Spleen (tissue), 13 donors: ENCODE measurements at regions of chr2 and their contacts with region 1.

Region 1: DNA sequence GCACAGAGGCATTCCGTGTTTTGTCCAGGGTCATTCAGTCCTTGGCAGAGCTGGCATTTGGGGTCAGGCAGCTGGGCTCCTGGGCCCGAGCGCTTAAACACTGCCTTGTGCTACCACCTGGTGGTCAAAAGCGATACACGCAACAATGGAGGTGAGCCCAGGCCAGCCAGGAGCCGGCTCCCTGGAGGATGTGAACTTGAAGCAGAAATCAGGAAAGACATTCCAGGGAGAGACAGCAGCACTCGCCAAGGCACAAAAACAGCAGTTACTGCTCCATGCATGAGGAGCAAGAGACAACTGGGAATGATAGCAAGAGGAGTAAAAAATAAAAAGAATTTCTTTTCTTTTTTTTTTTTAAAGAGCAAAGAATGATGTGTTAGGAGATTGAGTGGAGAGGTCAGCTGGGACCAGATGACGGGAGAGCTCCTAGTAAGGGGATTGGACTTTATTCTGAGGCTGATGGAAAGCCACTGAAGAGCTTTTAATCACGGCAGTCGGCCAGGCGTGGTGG is 20.7 kb downstream of the SCYGR8 start:
- DNase-seq: peak; percentile 89
- H3K4me3 ChIP-seq: no peak overlapping the region
- H3K27ac ChIP-seq: no peak overlapping the region
- H3K4me1 ChIP-seq: peaks cover 0 to 7% (median 0%) of the 10 kb centered on the region in 6 donors
- H3K27me3 ChIP-seq: no peaks in the 10 kb centered on the region
- CTCF ChIP-seq: peak; percentile 72 to 92 (median 86)
- POLR2A ChIP-seq: no peak

Region 2: GRCh38 chr2:227125506-227125905 is 640.9 kb before region 1 on chr2:
- intact Hi-C with region 1: loop called (anchors 10 kb)
- DNase-seq: no peak
- H3K4me3 ChIP-seq: no peak overlapping the region
- H3K27ac ChIP-seq: no peak overlapping the region
- H3K4me1 ChIP-seq: no peaks in the 10 kb centered on the region
- H3K27me3 ChIP-seq: peaks cover 0 to 6% (median 0%) of the 10 kb centered on the region in 7 donors
- CTCF ChIP-seq: no peak
- POLR2A ChIP-seq: no peak

Region 3: DNA sequence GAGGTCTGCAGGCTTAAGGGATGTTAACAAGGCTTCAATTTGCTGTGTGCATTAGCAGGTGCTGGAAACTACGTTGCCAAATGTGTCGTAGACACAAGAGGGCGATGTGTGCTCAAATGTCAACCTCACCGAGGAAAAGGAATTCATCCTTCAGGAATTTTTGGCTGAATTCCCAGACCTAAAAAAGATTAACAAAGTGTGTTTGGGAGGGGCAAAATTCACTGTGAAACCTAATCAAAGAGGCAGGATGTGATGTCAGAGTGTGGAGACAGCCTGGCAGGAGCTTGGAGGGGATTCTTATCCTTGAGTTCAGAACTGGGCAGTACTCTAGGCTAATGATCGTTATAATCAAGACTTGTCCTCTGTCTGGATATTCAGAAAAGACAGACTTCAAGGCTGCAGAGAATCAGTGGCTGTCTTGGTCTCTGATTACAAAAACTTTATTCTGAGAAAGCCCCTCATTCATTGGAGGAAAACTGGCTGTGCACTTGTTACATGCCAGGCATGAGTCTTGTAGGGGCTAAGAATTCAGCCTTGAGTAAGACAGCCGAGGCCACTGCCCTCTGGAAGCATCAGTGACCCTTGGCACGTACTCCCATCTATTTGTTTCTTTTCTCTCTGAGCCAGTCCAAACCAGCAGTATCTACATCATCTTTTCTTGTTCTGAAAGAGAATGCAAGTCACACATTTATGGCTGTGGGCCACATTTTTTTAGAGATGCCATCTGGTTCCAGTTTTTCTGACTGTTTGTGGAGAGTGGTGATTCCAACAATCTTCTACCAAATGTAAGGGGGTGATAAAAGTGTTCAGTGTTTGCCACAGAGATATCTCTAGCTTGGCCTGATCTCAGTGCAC is 360.0 kb before region 1 on chr2:
- intact Hi-C with region 1: loop called (anchors 5 kb)
- DNase-seq: no peak
- H3K4me3 ChIP-seq: no peak overlapping the region
- H3K27ac ChIP-seq: peak overlapping the region; percentile 23 to 82 (median 69)
- H3K4me1 ChIP-seq: peaks cover 10 to 54% (median 31%) of the 10 kb centered on the region in 6 donors
- H3K27me3 ChIP-seq: no peaks in the 10 kb centered on the region
- CTCF ChIP-seq: peak in 10 of 11 experiments; percentile 22 to 71 (median 58)
- POLR2A ChIP-seq: no peak

Region 4: DNA sequence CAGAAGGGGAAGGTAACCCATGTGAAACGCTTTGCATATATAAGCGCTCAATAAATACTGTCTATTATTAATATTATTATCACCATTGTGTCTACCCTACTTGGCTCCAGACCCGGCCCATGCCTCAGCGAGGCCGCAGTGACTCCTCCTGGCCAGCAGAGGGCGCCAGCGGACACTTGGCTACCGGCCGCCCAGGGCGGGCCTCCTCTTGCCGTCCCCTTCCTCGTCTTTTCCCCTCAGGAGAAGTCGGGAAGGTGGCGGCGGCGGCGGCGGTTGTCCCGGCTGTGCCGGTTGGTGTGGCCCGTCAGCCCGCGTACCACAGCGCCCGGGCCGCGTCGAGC is 294.5 kb before region 1 on chr2 and contains the start of gene AGFG1:
- intact Hi-C with region 1: loop called (anchors 10 kb)
- DNase-seq: peak; percentile 98
- H3K4me3 ChIP-seq: peak within 1 kb of the TSS; percentile 59 to 98 (median 90)
- H3K27ac ChIP-seq: peak within 1 kb of the TSS; percentile 78 to 97 (median 92)
- H3K4me1 ChIP-seq: peaks cover 24 to 48% (median 33%) of the 10 kb centered on the region in 6 donors
- H3K27me3 ChIP-seq: no peaks in the 10 kb centered on the region
- CTCF ChIP-seq: peak; percentile 96 to 100 (median 99)
- POLR2A ChIP-seq: no peak
- total RNA-seq, gene AGFG1: 52.5 to 111 (median 87.9) TPM

Region 5: DNA sequence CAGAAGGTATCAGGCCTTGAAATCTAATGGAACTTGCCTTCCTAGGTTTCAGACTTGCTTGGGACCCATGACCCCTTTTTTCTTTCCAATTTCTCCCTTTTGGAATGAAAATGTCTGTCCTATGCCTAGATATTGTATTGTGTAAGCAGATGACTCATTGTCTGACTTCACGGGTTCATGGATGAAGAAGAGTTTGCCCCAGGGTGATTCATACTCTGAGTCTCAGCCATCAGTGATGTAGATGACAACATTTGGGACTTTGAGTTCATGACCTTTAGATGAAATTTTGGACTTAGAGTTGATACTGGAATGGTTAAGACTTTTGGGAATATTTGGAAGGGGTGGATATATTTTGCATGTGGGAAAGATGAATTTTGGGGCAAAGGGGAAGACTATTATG is 111.0 kb before region 1 on chr2:
- intact Hi-C with region 1: loop called (anchors 5 kb)
- DNase-seq: no peak
- H3K4me3 ChIP-seq: no peak overlapping the region
- H3K27ac ChIP-seq: no peak overlapping the region
- H3K4me1 ChIP-seq: peaks cover 0 to 6% (median 2%) of the 10 kb centered on the region in 6 donors
- H3K27me3 ChIP-seq: no peaks in the 10 kb centered on the region
- CTCF ChIP-seq: no peak
- POLR2A ChIP-seq: no peak